ENCODE measurements at regions of chr12 and their contacts with region 1.

Region 1: GRCh38 chr12:119667577-119668323 is at the start of gene PRKAB1:
- DNase-seq: peak; percentile 89 to 99 (median 94)
- ATAC-seq: peak; percentile 90
- H3K4me3 ChIP-seq: peak within 1 kb of the TSS; percentile 96 to 97
- H3K4me3 Mint-ChIP-seq: peak within 1 kb of the TSS; percentile 87
- H3K27ac ChIP-seq: peak within 1 kb of the TSS; percentile 75 to 88
- H3K27ac Mint-ChIP-seq: peak within 1 kb of the TSS; percentile 90
- H3K4me1 ChIP-seq: peaks cover 36% of the 10 kb centered on the region
- H3K4me1 Mint-ChIP-seq: peaks cover 59% of the 10 kb centered on the region
- H3K27me3 ChIP-seq: no peaks in the 10 kb centered on the region
- H3K27me3 Mint-ChIP-seq: no peaks in the 10 kb centered on the region
- CTCF ChIP-seq: peak; percentile 94
- total RNA-seq, gene PRKAB1: 17.9 to 23.7 TPM

Region 2: DNA sequence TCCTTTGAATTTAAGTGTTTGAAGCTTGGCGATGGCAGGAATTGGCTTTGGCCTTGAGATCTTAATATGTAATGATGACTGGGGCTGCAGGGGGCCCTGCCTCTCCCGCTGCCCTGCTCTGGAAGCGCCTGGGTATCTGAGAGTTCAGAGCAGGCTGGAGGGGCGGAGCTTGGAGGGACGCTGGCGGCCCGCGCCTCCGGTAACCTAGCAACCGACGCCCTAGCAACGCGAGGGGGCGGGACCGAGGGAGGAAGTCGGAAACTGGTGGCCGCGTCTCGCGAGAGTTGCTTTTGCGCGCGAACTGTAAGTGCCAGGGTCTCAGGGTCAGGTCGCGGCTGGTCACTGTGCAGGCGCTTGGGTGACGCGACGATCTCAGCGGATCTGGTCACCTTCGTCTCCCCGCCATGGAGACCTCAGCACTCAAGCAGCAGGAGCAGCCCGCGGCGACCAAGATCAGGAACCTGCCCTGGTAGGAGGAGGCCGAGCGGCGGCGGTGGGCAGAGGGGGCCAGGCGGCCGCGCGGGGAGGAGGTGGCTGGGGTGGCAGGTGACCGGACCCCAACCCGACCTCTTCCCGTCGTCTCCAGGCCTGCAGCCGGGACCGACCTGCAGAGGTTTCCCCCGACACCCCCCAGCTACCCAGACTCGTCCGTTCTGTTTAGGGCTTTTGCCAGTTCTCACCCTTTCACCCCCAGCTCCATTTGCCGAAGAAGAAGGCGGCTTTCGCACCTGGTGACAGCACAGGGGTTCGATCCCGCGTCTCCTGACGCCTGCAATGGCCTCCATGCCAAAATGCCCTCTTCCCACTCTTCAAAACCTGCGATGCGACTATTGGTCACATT is 1651.1 kb before region 1 on chr12 and contains the start of gene RFC5:
- CTCF ChIA-PET with region 1: no interaction called
- POLR2A ChIA-PET with region 1: interaction called, 4 read pairs
- intact Hi-C with region 1: loop called in 1 of 2 experiments (anchors 5 kb)
- DNase-seq: peak; percentile 94 to 99 (median 98)
- ATAC-seq: peak; percentile 97
- H3K4me3 ChIP-seq: peak within 1 kb of the TSS; percentile 88 to 98
- H3K4me3 Mint-ChIP-seq: peak within 1 kb of the TSS; percentile 90
- H3K27ac ChIP-seq: peak within 1 kb of the TSS in 1 of 2 experiments; percentile 58
- H3K27ac Mint-ChIP-seq: peak within 1 kb of the TSS; percentile 90
- H3K4me1 ChIP-seq: peaks cover 19% of the 10 kb centered on the region
- H3K4me1 Mint-ChIP-seq: peaks cover 18% of the 10 kb centered on the region
- H3K27me3 ChIP-seq: no peaks in the 10 kb centered on the region
- H3K27me3 Mint-ChIP-seq: no peaks in the 10 kb centered on the region
- CTCF ChIP-seq: no peak
- total RNA-seq, gene RFC5: 9.9 to 13.8 TPM

Region 3: GRCh38 chr12:118061011-118061875 is 1606.5 kb before region 1 on chr12 and contains the start of gene WSB2:
- CTCF ChIA-PET with region 1: no interaction called
- POLR2A ChIA-PET with region 1: no interaction called
- intact Hi-C with region 1: loop called in 1 of 2 experiments (anchors 10 kb)
- DNase-seq: peak; percentile 5 to 69 (median 50)
- ATAC-seq: peak; percentile 43
- H3K4me3 ChIP-seq: peak within 1 kb of the TSS; percentile 72 to 86
- H3K4me3 Mint-ChIP-seq: peak within 1 kb of the TSS; percentile 93
- H3K27ac ChIP-seq: peak within 1 kb of the TSS; percentile 67 to 92
- H3K27ac Mint-ChIP-seq: peak within 1 kb of the TSS; percentile 98
- H3K4me1 ChIP-seq: peaks cover 40% of the 10 kb centered on the region
- H3K4me1 Mint-ChIP-seq: peaks cover 57% of the 10 kb centered on the region
- H3K27me3 ChIP-seq: peaks cover 0 to 2% of the 10 kb centered on the region in 2 experiments
- H3K27me3 Mint-ChIP-seq: no peaks in the 10 kb centered on the region
- CTCF ChIP-seq: no peak
- total RNA-seq, gene WSB2: 16.4 to 19.5 TPM

Region 4: GRCh38 chr12:119876761-119877638 is 209.2 kb after region 1 on chr12 and contains the start of gene CIT:
- CTCF ChIA-PET with region 1: no interaction called
- POLR2A ChIA-PET with region 1: no interaction called
- intact Hi-C with region 1: loop called in 1 of 2 experiments (anchors 5 kb)
- DNase-seq: peak; percentile 64 to 93 (median 83)
- ATAC-seq: peak; percentile 99
- H3K4me3 ChIP-seq: peak within 1 kb of the TSS; percentile 83 to 88
- H3K4me3 Mint-ChIP-seq: peak within 1 kb of the TSS; percentile 86
- H3K27ac ChIP-seq: no peak within 1 kb of the TSS
- H3K27ac Mint-ChIP-seq: peak within 1 kb of the TSS; percentile 53
- H3K4me1 ChIP-seq: no peaks in the 10 kb centered on the region
- H3K4me1 Mint-ChIP-seq: peaks cover 10% of the 10 kb centered on the region
- H3K27me3 ChIP-seq: no peaks in the 10 kb centered on the region
- H3K27me3 Mint-ChIP-seq: no peaks in the 10 kb centered on the region
- CTCF ChIP-seq: no peak
- total RNA-seq, gene CIT: 0.84 to 1.6 TPM

Region 5: GRCh38 chr12:121089031-121089812 is 1421.5 kb after region 1 on chr12:
- CTCF ChIA-PET with region 1: no interaction called
- POLR2A ChIA-PET with region 1: no interaction called
- intact Hi-C with region 1: no loop called
- DNase-seq: no peak
- ATAC-seq: no peak
- H3K4me3 ChIP-seq: no peak overlapping the region
- H3K4me3 Mint-ChIP-seq: no peak overlapping the region
- H3K27ac ChIP-seq: no peak overlapping the region
- H3K27ac Mint-ChIP-seq: no peak overlapping the region
- H3K4me1 ChIP-seq: peaks cover 34% of the 10 kb centered on the region
- H3K4me1 Mint-ChIP-seq: peaks cover 45% of the 10 kb centered on the region
- H3K27me3 ChIP-seq: no peaks in the 10 kb centered on the region
- H3K27me3 Mint-ChIP-seq: no peaks in the 10 kb centered on the region
- CTCF ChIP-seq: no peak